IMR-90 (cell line): ENCODE measurements at regions of chr2 and their contacts with region 1.

Region 1: GRCh38 chr2:237413777-237414661 is at the start of gene COL6A3:
- DNase-seq: peak; percentile 98
- ATAC-seq: peak; percentile 78
- H3K4me3 ChIP-seq: peak within 1 kb of the TSS; percentile 96
- H3K27ac ChIP-seq: peak within 1 kb of the TSS; percentile 89
- H3K4me1 ChIP-seq: no peaks in the 10 kb centered on the region
- H3K27me3 ChIP-seq: no peaks in the 10 kb centered on the region
- CTCF ChIP-seq: no peak
- POLR2A ChIP-seq: peak; percentile 98
- RAD21 ChIP-seq: peak; percentile 3; the same call in 1 of the 2 replicates
- total RNA-seq, gene COL6A3: 1,501 and 1,855 TPM in 2 replicates

Region 2: GRCh38 chr2:237092920-237093781 is 320.9 kb before region 1 on chr2:
- CTCF ChIA-PET with region 1: interaction called, 3 read pairs
- POLR2A ChIA-PET with region 1: no interaction called
- dilution Hi-C with region 1: no loop called
- in situ Hi-C with region 1: no loop called
- intact Hi-C with region 1: loop called (anchors 2 kb)
- DNase-seq: peak; percentile 85
- ATAC-seq: peak; percentile 72
- H3K4me3 ChIP-seq: no peak overlapping the region
- H3K27ac ChIP-seq: peak overlapping the region; percentile 75; the same call in 1 of the 2 replicates
- H3K4me1 ChIP-seq: peaks cover 20% of the 10 kb centered on the region
- H3K27me3 ChIP-seq: no peaks in the 10 kb centered on the region
- CTCF ChIP-seq: peak; percentile 84
- POLR2A ChIP-seq: no peak
- RAD21 ChIP-seq: peak; percentile 87

Region 3: GRCh38 chr2:237154082-237154638 is 259.9 kb before region 1 on chr2:
- CTCF ChIA-PET with region 1: no interaction called
- POLR2A ChIA-PET with region 1: interaction called, 6 read pairs
- dilution Hi-C with region 1: no loop called
- in situ Hi-C with region 1: no loop called
- intact Hi-C with region 1: loop called (anchors 1 kb)
- DNase-seq: peak; percentile 81
- ATAC-seq: no peak; the same call in 1 of the 2 replicates
- H3K4me3 ChIP-seq: no peak overlapping the region
- H3K27ac ChIP-seq: peak overlapping the region; percentile 1; the same call in 1 of the 2 replicates
- H3K4me1 ChIP-seq: peaks cover 30% of the 10 kb centered on the region
- H3K27me3 ChIP-seq: no peaks in the 10 kb centered on the region
- CTCF ChIP-seq: peak; percentile 91
- POLR2A ChIP-seq: 0 out of 2 replicates have a peak, but pooled peaks have one; percentile 21
- RAD21 ChIP-seq: peak; percentile 97

Region 4: GRCh38 chr2:237256887-237257286 is 157.1 kb before region 1 on chr2:
- CTCF ChIA-PET with region 1: no interaction called
- POLR2A ChIA-PET with region 1: interaction called, 3 read pairs
- dilution Hi-C with region 1: no loop called
- in situ Hi-C with region 1: no loop called
- intact Hi-C with region 1: loop called (anchors 5 kb)
- DNase-seq: peak; percentile 86
- ATAC-seq: peak; percentile 48
- H3K4me3 ChIP-seq: no peak overlapping the region
- H3K27ac ChIP-seq: peak overlapping the region; percentile 95
- H3K4me1 ChIP-seq: peaks cover 43% of the 10 kb centered on the region
- H3K27me3 ChIP-seq: no peaks in the 10 kb centered on the region
- CTCF ChIP-seq: no peak
- POLR2A ChIP-seq: 0 out of 2 replicates have a peak, but pooled peaks have one; percentile 21
- RAD21 ChIP-seq: no peak

Region 5: DNA sequence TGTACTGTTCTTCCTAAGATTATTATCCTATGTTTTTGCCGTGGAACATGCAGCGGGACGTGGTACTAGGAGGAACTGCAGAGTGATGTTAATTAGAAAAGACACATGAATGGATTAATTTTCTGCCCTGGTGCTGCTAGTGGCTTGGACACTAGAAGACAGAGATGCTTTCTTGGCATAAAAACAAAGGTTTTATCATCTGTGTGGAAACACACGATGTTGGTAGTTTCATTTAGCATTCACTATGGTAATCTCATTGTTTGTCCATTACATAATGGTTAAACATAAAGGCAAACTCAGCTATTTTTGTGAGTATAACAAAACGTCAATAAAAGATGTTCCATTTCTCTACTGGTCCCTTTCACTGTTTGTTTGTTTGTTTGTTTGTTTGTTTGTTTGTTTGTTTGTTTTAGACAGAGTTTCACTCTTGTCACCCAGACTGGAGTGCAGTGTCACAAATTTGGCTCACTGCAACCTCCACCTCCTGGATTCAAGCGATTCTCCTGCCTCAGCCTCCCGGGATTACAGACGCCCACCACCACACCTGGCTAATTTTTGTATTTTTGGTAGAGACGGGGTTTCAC is 22.8 kb before region 1 on chr2:
- CTCF ChIA-PET with region 1: no interaction called
- POLR2A ChIA-PET with region 1: no interaction called
- dilution Hi-C with region 1: no loop called
- in situ Hi-C with region 1: no loop called
- intact Hi-C with region 1: no loop called
- DNase-seq: no peak
- ATAC-seq: no peak
- H3K4me3 ChIP-seq: no peak overlapping the region
- H3K27ac ChIP-seq: no peak overlapping the region
- H3K4me1 ChIP-seq: peaks cover 23% of the 10 kb centered on the region
- H3K27me3 ChIP-seq: no peaks in the 10 kb centered on the region
- CTCF ChIP-seq: no peak
- POLR2A ChIP-seq: no peak
- RAD21 ChIP-seq: no peak

Region 6: DNA sequence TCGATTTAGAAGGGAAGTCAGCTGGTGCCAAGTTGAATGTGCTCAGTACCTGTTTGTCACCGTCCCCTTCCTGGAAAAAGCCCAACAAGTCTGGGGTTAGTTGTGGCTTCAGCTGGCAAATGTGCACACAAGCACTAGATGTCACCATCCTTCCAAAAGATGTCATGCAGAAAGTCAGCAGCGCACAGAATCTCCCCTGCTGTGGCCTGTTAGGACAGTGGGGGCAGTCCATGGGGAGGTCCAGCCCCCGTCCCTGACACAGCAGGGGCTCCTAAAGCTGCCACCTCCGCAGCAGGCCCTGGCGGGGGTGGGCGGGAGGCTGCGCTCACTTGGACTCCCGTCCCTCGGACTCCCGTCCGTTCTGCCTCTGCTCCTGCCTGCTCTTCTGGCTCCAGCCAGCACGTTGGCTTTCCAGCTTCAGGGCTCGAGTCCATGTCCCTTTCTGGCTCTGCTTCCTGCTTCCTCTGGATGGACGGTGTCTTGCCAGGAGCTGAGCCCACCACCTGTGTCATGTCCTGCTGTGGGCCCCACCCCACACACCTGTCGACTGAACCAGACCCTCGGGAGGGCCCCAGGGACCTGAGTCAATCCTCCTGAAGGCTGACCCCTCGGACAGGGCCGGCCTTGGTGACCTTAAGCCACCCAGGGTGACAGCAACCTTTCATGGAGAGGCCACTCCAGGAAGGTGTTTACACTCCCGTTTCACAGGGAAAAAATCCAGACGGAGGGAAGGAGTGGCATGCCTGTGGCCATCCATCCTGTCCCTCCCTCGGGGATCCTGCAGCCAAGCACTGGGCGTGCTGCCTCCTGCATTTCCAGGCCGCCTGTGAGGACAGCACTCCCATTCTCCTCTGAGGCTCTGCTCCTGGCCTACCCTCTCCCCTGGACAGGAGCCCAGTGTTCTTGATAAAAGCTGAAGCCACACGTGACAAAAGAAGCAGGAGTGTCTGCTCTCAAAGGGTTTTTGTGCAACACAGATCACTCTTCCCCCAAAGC is 168.0 kb after region 1 on chr2:
- CTCF ChIA-PET with region 1: no interaction called
- POLR2A ChIA-PET with region 1: interaction called, 10 read pairs
- dilution Hi-C with region 1: no loop called
- in situ Hi-C with region 1: loop called (anchors 10 kb)
- intact Hi-C with region 1: no loop called
- DNase-seq: peak; percentile 71
- ATAC-seq: peak; percentile 92
- H3K4me3 ChIP-seq: no peak overlapping the region
- H3K27ac ChIP-seq: no peak overlapping the region
- H3K4me1 ChIP-seq: no peaks in the 10 kb centered on the region
- H3K27me3 ChIP-seq: peaks cover 4% of the 10 kb centered on the region; the same call in 1 of the 2 replicates
- CTCF ChIP-seq: peak; percentile 66
- POLR2A ChIP-seq: no peak
- RAD21 ChIP-seq: peak; percentile 77